ENCODE measurements at regions of chr19 and their contacts with region 1.

Region 1: GRCh38 chr19:1103708-1104310 is at the start of gene GPX4:
- DNase-seq: peak; percentile 100
- ATAC-seq: peak; percentile 85 to 86
- total RNA-seq, gene GPX4: 378 to 432 TPM

Region 2: DNA sequence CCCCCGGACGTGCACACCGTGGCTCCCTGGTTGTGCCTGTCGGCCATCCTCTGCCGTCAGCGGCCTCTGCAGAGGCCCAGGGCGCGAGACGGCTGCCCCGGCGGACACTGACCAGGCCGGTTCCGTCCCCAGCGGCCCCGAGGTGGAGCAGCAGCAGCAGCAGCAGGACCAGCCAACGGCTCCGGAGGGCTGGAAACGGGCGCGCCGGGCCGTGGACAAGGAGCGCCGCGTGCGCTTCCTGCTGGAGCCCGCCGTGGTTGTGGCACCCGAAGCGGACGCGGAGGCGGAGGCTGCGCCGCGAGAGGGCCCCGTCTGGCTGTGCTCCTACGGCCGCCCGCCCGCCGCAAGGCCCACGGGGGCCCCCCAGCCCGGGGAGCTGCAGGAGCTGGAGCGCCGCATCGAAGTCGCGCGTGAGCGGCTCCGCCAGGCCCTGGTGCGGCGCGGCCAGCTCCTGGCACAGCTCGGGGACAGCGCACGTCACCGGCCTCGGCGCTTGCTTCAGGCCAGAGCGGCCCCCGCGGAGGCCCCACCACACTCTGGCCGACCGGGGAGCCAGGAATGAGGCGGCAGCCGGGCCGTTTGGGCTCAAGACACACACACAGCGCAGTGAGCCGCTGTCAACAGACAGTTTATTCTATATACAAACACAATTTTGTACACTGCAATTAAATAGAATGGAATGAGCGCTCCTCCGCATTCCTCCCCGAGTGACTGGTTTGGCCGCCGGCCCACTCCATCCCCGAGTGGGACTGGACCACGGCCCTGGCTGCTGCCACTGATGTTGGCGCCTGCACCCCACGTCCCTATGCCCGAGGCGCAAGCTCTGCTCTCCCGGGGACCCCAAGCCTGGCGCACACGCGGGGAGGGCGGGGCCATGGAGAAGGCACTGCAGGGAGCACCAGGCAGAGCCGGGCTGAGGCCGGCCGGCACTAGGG is 94.5 kb before region 1 on chr19:
- intact Hi-C with region 1: no loop called
- DNase-seq: peak; percentile 65
- ATAC-seq: peak; percentile 50 to 75

Region 3: GRCh38 chr19:1026189-1027019 is 77.4 kb before region 1 on chr19 and contains the start of gene CNN2:
- intact Hi-C with region 1: loop called in 1 of 2 experiments (anchors 5 kb)
- DNase-seq: peak; percentile 87
- ATAC-seq: peak; percentile 84 to 85
- total RNA-seq, gene CNN2: 74.4 to 83.8 TPM

Measured in left cardiac atrium (tissue), 4 donors.